Left ventricle myocardium superior (tissue), 1 donor: ENCODE measurements at regions of chr1 and their contacts with region 1.

Region 1: GRCh38 chr1:243582326-243582725 is 267.7 kb downstream of the AKT3 start:
- DNase-seq: no peak
- ATAC-seq: no peak

Region 2: DNA sequence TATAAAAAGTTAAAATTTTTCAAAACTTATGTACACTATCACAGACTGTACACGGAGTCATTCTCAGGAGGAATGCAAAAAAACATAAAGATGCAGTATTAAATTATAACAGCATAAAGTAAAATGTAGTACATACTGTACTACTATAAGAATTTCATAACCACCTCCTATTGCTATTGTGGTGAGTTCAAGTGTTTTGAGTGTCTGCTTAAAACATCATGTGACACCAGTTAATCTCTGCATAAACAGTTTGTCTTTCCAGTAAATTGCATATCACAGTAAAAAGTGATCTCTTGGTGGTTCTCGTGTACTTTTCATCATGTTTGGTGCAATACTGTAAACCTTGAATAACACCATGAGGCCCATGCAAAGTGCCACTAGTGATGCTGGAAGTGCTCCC is 281.3 kb before region 1 on chr1:
- intact Hi-C with region 1: no loop called
- DNase-seq: no peak
- ATAC-seq: no peak

Region 3: DNA sequence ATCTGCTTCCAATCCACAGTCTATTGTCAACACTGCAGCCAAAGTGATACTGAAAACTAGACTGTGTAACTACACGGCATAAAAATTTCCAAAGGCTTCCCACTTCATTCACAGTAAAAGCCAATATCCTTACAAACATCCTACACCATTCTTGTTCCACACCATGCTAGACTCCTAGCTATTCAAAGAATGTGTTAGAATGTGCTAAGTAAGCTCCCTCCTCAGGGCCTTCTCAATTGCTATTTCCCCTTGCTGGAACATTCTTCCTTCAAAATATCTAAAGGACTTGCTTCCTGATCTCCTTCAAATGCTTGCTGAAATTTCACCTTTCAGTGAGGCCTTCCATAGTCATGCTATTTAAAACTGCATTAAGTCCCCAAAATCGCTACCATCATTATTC is 39.6 kb after region 1 on chr1:
- intact Hi-C with region 1: loop called (anchors 2 kb)
- DNase-seq: no peak
- ATAC-seq: no peak